ENCODE measurements at regions of chr9 and their contacts with region 1.

Region 1: DNA sequence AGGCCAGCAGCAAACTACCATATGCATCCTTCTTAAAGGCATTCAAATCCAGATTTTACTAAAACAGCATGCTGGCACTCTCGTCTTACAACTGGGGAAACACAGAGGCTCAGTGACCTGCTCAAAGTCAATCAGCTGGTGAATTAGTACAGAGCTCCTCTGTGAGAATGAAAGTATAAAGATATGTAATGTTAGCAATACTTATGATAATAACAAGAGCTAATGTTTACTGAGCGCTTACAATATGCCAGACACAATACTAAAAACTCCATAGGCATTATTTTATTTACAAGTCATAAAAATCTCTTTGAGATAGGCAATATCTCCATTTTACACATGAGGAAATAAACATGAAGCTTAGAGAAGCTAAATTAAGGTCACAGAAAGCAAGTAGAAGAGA is 28.6 kb downstream of the FKBP15 start:
- DNase-seq: no peak
- H3K4me3 ChIP-seq: no peak overlapping the region
- H3K27ac ChIP-seq: no peak overlapping the region
- H3K4me1 ChIP-seq: peaks cover 14% of the 10 kb centered on the region
- H3K27me3 ChIP-seq: no peaks in the 10 kb centered on the region
- CTCF ChIP-seq: no peak

Region 2: DNA sequence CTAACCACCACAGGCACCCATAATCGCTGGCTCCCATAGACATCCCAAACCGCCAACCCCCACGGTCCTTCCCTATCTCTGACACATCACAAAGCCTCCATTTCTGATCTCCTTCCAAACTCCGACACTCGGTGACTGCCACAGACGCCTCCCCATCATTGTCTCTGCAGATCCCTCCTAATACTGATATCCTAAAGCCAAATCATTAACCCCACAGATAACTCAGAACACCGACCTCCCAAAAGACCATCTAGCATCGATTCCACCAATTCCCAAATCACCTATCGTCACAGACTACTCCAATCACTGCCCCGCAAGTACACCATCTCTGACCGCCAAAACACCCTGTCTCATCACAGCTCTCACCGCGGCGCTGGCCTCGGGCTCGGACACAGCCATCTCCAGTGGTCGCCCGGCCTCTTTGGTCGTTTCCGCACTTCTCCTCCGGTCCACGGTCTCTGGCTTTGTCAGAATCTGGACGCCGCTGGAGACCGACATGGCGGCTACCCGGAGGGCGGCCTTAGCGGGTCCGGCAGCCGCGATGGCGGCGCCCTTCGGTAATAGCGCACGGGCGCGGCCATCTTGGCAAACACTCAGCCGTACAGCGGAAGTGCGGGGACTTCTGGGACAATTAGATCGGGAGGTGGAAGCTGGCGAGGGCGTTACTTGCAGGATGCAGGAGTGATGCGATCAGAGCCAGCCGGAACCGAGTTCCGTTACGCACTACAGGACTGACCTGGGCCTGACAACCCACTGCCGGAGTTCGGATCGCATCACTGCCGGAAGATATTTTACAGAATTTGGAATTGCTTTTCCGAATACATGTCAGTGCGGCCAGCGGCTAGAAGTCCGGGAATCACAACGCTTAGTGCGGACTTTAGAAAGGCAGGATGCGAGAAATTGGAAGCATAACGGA is 136.0 kb before region 1 on chr9 and contains the start of gene ZFP37:
- dilution Hi-C with region 1: no loop called
- DNase-seq: peak; percentile 52
- H3K4me3 ChIP-seq: peak within 1 kb of the TSS; percentile 69 to 78 (median 76)
- H3K27ac ChIP-seq: no peak within 1 kb of the TSS
- H3K4me1 ChIP-seq: no peaks in the 10 kb centered on the region
- H3K27me3 ChIP-seq: peaks cover 14% of the 10 kb centered on the region
- CTCF ChIP-seq: no peak
- polyA plus RNA-seq, gene ZFP37: 0.24 to 0.72 TPM (median 0.41 TPM) in 3 replicates

Region 3: GRCh38 chr9:113427629-113428028 is 235.2 kb after region 1 on chr9:
- dilution Hi-C with region 1: loop called (anchors 10 kb)
- DNase-seq: no peak
- H3K4me3 ChIP-seq: no peak overlapping the region
- H3K27ac ChIP-seq: no peak overlapping the region
- H3K4me1 ChIP-seq: no peaks in the 10 kb centered on the region
- H3K27me3 ChIP-seq: no peaks in the 10 kb centered on the region
- CTCF ChIP-seq: no peak

Measured in keratinocyte (primary cell).